ENCODE measurements at regions of chr18 and their contacts with region 1.

Region 1: DNA sequence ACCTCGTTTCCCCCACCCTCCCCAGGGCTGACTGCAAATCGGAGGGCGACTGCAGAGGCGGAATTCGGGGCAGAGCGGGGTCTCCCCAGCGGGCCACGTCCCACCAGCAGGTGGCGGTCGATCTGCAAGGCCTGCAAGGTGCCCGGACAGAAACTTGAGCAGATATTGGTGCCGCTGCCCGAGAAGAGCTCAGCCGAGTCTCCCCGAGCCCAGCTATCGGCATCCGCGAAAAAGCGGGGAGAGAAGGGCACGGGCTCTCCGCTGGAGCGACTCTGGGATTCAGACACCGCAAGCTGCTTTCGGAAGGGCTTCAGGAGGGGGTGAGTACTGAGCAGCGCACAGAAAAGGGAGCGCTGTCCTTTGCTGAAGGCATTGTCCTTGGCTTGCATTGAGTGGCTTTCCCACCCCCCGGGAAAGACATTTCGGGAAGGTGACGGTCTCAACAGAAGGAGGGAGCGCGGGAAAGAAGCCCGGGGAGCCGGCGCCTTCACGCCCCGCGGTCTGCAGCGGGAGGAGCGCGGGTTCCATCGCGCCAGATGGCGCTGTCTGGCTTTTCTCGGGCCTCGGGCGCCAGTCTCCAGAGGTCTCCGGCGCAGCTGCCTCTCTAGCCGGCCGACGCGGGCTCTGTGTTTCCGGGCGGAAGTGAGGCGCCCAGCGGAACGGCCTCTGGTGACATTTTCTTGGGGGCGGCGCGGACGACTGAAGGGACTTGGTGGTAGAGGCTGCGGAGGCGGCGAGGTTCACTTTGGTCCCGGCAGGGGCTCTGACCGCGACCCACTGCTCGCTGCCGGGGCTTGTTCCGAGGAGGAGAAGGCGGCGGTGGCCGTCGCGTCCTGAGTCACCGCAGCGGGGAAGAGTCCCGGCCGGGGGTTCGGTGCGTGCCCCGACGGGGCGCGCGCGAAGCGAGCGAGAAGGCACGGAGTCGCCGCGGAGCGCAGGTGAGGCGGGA is 69.5 kb downstream of the HAUS1 start:
- H3K4me3 ChIP-seq: peak overlapping the region; percentile 86
- H3K27ac ChIP-seq: peak overlapping the region; percentile 100
- H3K4me1 ChIP-seq: 0 out of 2 replicates have a peak, but pooled peaks cover 9% of the 10 kb centered on the region
- CTCF ChIP-seq: peak; percentile 93

Region 2: GRCh38 chr18:46161703-46162396 is 11.8 kb before region 1 on chr18:
- CTCF ChIA-PET with region 1: interaction called, 43 read pairs
- POLR2A ChIA-PET with region 1: interaction called, 5 read pairs
- H3K4me3 ChIP-seq: no peak overlapping the region
- H3K27ac ChIP-seq: no peak overlapping the region
- H3K4me1 ChIP-seq: no peaks in the 10 kb centered on the region
- CTCF ChIP-seq: no peak

Region 3: DNA sequence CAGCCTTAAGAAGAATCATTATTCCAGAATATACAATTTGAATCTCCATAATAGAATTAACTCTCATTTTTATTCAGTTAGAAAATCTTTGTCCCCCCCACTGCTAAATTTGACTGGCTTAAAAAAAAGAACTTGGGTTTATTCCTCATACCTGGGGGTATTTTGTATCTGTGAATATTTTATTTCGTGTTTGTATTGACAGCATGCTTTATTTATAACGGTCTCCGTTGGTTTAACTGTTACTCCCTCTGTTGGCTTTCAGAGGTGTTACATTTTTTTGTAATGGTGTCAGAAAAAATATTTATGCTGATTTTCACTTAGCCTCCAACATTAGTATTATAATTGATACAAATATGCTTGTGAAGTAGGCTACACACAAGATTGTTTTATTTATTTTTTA is 39.6 kb after region 1 on chr18:
- CTCF ChIA-PET with region 1: interaction called, 24 read pairs
- POLR2A ChIA-PET with region 1: interaction called, 5 read pairs
- H3K4me3 ChIP-seq: no peak overlapping the region
- H3K27ac ChIP-seq: no peak overlapping the region
- H3K4me1 ChIP-seq: peaks cover 14% of the 10 kb centered on the region
- CTCF ChIP-seq: no peak

Region 4: DNA sequence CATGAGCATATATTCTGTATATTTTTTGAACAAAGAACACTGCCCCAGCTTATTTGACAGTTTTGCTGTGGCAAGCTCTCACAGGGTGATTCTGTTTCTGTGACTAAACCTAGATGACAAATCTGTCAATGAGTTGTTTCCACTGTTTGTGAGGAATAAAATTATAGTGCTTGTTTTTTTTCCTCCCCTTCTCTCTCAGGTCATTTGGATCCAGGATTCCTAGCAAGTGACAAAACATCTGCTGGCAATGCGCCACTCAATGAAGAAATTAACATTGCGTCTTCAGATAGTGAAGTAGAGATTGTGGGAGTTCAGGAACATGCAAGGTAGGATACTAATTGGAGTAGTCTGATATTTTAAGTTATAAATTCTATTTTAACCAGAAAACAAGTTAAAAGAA is 79.8 kb after region 1 on chr18:
- CTCF ChIA-PET with region 1: interaction called, 16 read pairs
- POLR2A ChIA-PET with region 1: interaction called, 5 read pairs
- H3K4me3 ChIP-seq: no peak overlapping the region
- H3K27ac ChIP-seq: no peak overlapping the region
- H3K4me1 ChIP-seq: peaks cover 15% of the 10 kb centered on the region
- CTCF ChIP-seq: no peak

Region 5: GRCh38 chr18:46291149-46291548 is 117.5 kb after region 1 on chr18:
- CTCF ChIA-PET with region 1: interaction called, 9 read pairs
- POLR2A ChIA-PET with region 1: interaction called, 11 read pairs
- H3K4me3 ChIP-seq: no peak overlapping the region
- H3K27ac ChIP-seq: no peak overlapping the region
- H3K4me1 ChIP-seq: no peaks in the 10 kb centered on the region
- CTCF ChIP-seq: no peak